PC-3 (cell line): ENCODE measurements at regions of chr6 and their contacts with region 1.

Region 1: DNA sequence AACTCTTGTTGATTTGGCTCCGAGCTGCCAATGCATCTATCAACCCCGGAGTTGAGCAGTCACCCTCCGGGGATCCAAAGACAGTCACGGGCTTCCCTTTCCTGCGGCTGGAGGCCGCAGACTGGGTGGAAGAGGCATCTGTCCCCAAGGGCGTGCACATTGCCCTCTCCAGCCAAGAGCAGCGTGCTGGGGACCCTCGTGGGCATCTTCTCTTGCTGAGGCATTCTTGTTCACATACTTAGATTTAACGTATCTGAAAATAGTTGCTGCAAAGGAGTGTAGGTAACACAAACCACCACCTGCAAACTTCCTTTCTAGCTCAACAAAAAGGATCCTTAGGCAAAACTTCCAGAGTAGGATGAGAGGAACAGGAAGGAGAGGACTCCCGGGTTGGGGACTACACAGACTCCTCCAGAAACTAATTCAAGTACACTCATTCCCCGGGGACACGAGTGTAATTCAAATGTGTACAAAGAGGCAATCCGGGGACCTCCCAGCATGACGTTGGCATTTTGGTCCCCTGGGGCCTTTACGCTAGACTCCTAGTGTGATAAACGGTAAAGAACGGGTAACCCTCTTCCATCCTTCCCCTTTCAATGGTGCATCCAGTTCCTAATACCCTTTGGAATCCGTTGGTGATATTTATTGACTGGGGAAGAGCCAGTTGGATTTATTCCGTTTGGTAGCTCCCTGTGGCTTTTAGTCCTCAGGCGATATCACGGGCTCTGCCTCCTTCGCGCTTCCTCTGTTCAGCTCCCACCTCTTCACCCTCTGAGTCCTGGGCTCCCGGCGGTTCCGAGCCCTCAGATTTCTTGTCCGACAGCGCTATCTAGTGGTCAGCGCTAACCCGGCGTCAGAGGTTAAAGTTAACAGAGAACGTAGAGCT is 2.7 kb upstream of the COL12A1 start:
- DNase-seq: peak; percentile 85
- ATAC-seq: peak; percentile 39
- H3K4me3 ChIP-seq: peak overlapping the region; percentile 27; the same call in 1 of the 2 replicates
- H3K27ac ChIP-seq: no peak overlapping the region
- H3K4me1 ChIP-seq: peaks cover 19% of the 10 kb centered on the region
- H3K27me3 ChIP-seq: no peaks in the 10 kb centered on the region
- CTCF ChIP-seq: peak; percentile 91

Region 2: DNA sequence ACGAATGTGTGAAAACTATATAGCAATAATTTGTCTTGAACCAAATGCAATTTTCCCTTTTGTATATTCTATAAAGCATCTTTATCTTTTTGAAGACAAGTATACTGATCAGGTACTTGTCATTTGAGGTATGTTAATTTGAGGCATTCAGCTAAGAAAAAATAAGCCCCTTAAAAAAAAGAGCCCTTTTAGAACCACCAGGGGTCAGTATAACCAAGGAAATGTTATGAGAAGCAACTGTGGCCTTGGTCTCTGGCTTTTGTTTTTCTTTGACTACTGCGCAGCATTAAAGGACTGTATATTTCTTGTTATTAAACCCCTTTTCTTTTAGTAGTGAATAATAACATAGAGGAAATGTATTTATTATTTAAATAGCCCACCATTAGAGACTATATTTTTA is 1469.4 kb before region 1 on chr6:
- CTCF ChIA-PET with region 1: interaction called, 6 read pairs
- POLR2A ChIA-PET with region 1: no interaction called
- intact Hi-C with region 1: loop called (anchors 5 kb)
- DNase-seq: peak; percentile 69
- ATAC-seq: peak; percentile 60
- H3K4me3 ChIP-seq: no peak overlapping the region
- H3K27ac ChIP-seq: no peak overlapping the region
- H3K4me1 ChIP-seq: 0 out of 2 replicates have a peak, but pooled peaks cover 6% of the 10 kb centered on the region
- H3K27me3 ChIP-seq: no peaks in the 10 kb centered on the region
- CTCF ChIP-seq: peak; percentile 74

Region 3: DNA sequence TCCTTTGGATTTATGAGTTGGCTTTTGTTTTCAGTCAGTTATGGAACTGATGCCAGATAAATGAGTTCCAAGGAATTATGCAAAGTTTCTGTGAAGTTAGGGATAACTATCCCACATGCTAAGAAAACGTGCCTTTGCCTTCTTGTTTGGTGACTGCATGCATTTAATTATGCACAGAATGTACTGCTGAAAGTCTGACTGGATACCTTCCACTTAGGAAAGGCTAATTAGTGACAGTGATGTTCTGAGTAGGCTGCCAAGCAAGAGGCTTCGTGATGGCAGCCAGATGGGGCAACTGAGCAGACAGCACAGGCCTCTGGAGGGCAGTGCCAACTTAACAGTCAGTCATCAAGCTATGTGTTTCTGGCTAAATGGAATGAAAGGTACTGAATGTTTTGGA is 1222.7 kb before region 1 on chr6:
- CTCF ChIA-PET with region 1: no interaction called
- POLR2A ChIA-PET with region 1: no interaction called
- intact Hi-C with region 1: loop called (anchors 1 kb)
- DNase-seq: peak; percentile 50
- ATAC-seq: peak; percentile 80
- H3K4me3 ChIP-seq: no peak overlapping the region
- H3K27ac ChIP-seq: no peak overlapping the region
- H3K4me1 ChIP-seq: no peaks in the 10 kb centered on the region
- H3K27me3 ChIP-seq: no peaks in the 10 kb centered on the region
- CTCF ChIP-seq: peak; percentile 68

Region 4: DNA sequence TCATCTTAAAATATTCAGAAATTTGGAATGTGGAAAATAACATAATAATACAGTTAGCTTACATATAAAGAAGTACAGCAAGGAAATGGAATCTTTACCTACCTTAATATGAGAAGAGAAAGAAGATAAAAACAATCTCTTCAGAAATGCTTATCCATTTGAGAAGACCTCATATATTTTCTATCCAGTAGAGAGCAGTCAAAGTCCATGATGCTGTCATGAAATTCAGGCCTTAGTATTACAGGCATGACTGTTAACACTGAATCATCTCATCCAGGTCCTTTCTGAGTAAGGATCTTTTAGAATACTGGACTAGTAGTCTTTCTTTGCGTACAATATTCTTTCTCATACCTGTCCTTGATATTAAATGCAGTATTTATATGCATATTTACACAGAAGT is 799.1 kb before region 1 on chr6:
- CTCF ChIA-PET with region 1: interaction called, 3 read pairs
- POLR2A ChIA-PET with region 1: no interaction called
- intact Hi-C with region 1: loop called (anchors 1 kb)
- DNase-seq: peak; percentile 64
- ATAC-seq: peak; percentile 70
- H3K4me3 ChIP-seq: no peak overlapping the region
- H3K27ac ChIP-seq: no peak overlapping the region
- H3K4me1 ChIP-seq: no peaks in the 10 kb centered on the region
- H3K27me3 ChIP-seq: no peaks in the 10 kb centered on the region
- CTCF ChIP-seq: peak; percentile 65

Region 5: GRCh38 chr6:74755778-74756177 is 452.8 kb before region 1 on chr6:
- CTCF ChIA-PET with region 1: no interaction called
- POLR2A ChIA-PET with region 1: interaction called, 6 read pairs
- intact Hi-C with region 1: loop called (anchors 5 kb)
- DNase-seq: no peak
- ATAC-seq: no peak
- H3K4me3 ChIP-seq: no peak overlapping the region
- H3K27ac ChIP-seq: no peak overlapping the region
- H3K4me1 ChIP-seq: peaks cover 12% of the 10 kb centered on the region
- H3K27me3 ChIP-seq: no peaks in the 10 kb centered on the region
- CTCF ChIP-seq: no peak

Region 6: GRCh38 chr6:75101896-75102295 is 106.6 kb before region 1 on chr6:
- CTCF ChIA-PET with region 1: no interaction called
- POLR2A ChIA-PET with region 1: no interaction called
- intact Hi-C with region 1: loop called (anchors 5 kb)
- DNase-seq: no peak
- ATAC-seq: no peak
- H3K4me3 ChIP-seq: no peak overlapping the region
- H3K27ac ChIP-seq: no peak overlapping the region
- H3K4me1 ChIP-seq: peaks cover 16% of the 10 kb centered on the region
- H3K27me3 ChIP-seq: no peaks in the 10 kb centered on the region
- CTCF ChIP-seq: no peak

Region 7: GRCh38 chr6:75472885-75473284 is 264.3 kb after region 1 on chr6:
- CTCF ChIA-PET with region 1: no interaction called
- POLR2A ChIA-PET with region 1: no interaction called
- intact Hi-C with region 1: no loop called
- DNase-seq: no peak
- ATAC-seq: no peak
- H3K4me3 ChIP-seq: no peak overlapping the region
- H3K27ac ChIP-seq: no peak overlapping the region
- H3K4me1 ChIP-seq: no peaks in the 10 kb centered on the region
- H3K27me3 ChIP-seq: no peaks in the 10 kb centered on the region
- CTCF ChIP-seq: no peak